Tibial artery (tissue), 4 donors: ENCODE measurements at regions of chr7 and their contacts with region 1.

Region 1: DNA sequence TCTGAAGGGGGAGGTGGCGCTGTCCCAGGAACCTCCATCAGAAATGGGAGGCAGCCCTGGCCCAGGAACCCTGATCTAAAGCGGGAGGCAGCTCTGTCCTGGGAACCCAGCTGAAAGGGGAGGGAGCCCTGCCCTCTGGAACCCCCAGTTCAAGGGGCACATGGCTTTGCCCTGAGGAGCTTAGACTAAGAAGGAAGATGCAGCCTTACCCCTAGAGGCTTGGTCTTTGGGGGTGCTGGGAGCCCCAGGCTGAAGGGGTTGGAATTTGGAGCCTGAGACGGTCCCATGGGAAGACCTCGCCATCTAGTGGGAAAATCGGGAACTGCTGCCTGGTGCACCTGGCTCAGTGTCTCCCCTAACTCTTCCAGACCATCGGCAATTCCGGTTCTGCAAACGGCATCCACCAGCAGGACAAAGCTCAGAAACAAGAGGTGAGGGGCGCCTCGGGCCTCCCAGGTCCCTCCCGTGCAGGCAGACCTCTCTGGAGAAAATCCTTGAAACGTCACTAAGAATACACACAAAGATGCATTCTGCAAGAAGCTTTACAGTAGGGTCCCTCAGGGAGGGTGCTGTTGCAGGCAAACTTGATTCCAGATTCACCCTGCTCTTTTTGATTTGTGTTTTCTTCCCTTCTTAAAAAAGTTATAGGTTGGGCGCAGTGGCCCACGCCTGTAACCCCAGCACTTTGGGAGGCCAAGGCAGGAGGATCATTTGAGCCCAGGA is 52.4 kb upstream of the GTF2IRD1 start:
- DNase-seq: peak; percentile 61 to 75
- H3K4me3 ChIP-seq: no peak overlapping the region
- H3K27ac ChIP-seq: no peak overlapping the region
- H3K4me1 ChIP-seq: no peaks in the 10 kb centered on the region
- H3K27me3 ChIP-seq: no peaks in the 10 kb centered on the region
- CTCF ChIP-seq: peak; percentile 95 to 98

Region 2: DNA sequence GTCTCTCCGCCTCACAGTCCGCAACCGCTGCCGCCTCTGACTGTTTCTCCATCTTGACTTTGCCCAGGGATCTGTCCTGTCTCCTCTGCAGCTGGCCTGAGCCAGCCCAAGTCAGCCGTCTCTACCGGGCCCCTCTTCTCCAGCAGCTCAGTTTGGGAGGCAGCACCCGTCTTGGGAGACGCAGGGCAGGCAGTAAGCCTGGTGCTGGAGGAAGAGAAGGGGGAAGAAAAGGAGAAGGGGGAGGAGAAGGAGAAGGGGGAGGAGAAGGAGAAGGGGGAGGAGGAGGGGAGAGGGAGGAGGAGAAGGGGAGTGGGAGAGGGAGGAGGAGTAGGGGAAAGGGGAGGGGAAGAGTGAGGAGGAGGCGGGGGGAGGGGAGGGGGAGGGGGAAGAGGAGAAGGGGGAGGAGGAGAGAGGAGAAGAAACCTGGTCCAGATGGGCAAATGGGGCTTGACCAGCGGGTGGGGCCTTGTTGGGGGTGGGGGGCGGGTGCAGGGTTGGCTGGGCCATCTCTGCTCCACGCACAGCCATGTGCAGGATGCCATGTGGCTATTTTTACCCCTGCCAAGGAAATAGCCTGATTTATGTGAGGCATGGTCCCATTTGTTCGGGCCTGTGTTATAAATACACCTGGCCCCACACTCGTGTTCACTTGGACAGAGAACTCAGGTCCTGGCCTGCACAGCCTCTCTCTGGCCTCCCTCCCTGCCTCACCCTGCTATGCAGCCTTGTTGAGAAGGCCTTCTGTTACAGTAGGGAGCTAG is 1003.6 kb before region 1 on chr7:
- intact Hi-C with region 1: no loop called
- DNase-seq: no peak
- H3K4me3 ChIP-seq: no peak overlapping the region
- H3K27ac ChIP-seq: no peak overlapping the region
- H3K4me1 ChIP-seq: peaks cover 0 to 5% (median 0%) of the 10 kb centered on the region in 4 donors
- H3K27me3 ChIP-seq: no peaks in the 10 kb centered on the region
- CTCF ChIP-seq: no peak

Region 3: DNA sequence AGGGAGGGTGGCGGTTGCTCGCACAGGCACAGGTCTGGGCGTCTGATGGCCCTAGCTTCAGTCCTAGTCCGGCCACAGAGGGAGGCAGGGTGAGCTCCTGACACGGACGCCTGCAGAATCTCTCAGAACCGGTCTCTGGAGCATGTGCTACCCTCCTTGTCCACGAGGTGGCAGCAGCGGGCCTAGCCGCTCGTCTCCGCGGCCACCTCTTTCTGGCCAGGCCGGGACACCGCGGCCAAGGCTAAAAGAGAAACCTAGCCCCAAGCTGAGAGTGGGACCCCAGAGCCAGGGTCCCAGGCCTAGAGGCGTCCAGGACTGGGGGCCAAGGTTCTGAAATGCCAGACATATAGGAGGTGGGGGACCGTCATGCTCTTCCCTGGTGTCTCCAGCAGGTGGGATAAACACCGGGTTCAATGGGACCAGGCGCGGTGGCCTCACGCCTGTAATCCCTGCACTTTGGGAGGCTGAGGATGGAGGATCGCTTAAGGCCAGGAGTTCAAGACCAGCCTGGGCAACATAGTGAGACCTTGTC is 194.6 kb before region 1 on chr7:
- intact Hi-C with region 1: loop called (anchors 2 kb)
- DNase-seq: peak; percentile 83 to 91
- H3K4me3 ChIP-seq: peak overlapping the region; percentile 20 to 30
- H3K27ac ChIP-seq: no peak overlapping the region
- H3K4me1 ChIP-seq: peaks cover 0 to 23% (median 4%) of the 10 kb centered on the region in 4 donors
- H3K27me3 ChIP-seq: peaks cover 0 to 5% of the 10 kb centered on the region in 2 donors
- CTCF ChIP-seq: peak; percentile 95 to 98